Esophagus muscularis mucosa (tissue), 4 donors: ENCODE measurements at regions of chr11 and their contacts with region 1.

Region 1: DNA sequence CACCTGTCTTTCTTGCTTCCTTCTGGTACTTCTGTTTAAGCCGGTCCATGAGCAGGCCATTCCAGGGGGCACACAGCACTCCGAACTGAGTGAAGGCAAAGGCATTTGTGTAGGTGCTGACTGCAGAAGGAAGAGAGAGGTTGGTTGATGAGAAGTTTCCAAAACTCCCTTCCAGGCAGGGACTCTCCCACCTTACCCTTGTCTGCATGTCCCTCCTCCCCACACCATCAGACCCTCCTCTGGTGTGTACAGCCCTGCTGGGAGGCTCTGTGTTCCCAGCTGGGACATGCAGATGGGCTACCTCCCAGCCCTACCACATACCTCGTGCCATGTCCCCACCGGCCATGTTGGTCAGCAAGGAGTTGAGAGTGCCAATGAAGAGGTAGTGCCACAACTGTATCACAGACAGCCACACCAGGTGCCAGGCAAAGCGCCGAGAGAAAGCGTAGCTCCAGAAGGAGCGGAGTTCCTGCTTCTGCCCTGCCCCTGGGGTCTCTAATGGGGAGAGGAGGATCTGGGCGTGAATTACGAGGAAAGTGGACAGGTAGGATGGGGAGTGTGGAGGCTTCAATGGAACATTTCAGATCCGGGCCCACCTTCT is 12.2 kb downstream of the SLC43A3 start:
- DNase-seq: no peak
- H3K4me3 ChIP-seq: no peak overlapping the region
- H3K27ac ChIP-seq: no peak overlapping the region
- H3K4me1 ChIP-seq: peaks cover 9 to 21% (median 17%) of the 10 kb centered on the region in 4 donors
- H3K27me3 ChIP-seq: no peaks in the 10 kb centered on the region
- CTCF ChIP-seq: no peak
- EP300 ChIP-seq: no peak
- POLR2A ChIP-seq: no peak

Region 2: DNA sequence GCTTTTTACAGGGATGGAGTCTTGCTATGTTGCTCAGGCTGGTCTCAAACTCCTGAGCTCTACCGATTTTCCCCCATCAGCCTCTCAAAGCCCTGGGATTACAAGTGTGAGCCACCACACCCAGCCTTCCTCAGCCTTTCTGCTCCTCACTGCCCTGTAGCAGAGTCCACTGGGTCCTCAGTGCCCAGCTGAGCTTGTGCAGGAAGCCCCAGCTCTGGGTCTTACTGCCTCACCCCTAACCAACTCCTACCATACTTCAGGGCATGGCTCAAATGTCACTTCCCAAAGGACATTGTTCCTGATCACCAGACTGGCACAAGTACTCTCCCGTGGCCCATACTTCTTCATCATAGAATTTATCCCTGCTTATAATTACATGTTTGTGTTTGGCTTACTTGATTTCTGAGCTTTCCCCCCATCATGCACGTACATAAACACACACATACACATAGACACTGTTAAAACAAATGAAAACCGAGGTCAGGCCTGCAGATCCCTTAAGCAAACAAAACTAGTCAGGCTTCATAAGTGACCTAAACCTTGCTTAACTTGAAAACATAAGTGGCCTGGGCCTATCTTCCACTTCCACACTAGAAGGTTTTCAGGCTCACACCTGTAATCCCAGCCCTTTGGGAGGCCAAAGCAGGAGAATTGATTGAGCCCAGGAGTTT is 26.2 kb after region 1 on chr11:
- intact Hi-C with region 1: loop called (anchors 2 kb)
- DNase-seq: no peak
- H3K4me3 ChIP-seq: no peak overlapping the region
- H3K27ac ChIP-seq: no peak overlapping the region
- H3K4me1 ChIP-seq: no peaks in the 10 kb centered on the region
- H3K27me3 ChIP-seq: no peaks in the 10 kb centered on the region
- CTCF ChIP-seq: no peak
- EP300 ChIP-seq: no peak
- POLR2A ChIP-seq: no peak